PC-3 (cell line): ENCODE measurements at regions of chr1 and their contacts with region 1.

Region 1: DNA sequence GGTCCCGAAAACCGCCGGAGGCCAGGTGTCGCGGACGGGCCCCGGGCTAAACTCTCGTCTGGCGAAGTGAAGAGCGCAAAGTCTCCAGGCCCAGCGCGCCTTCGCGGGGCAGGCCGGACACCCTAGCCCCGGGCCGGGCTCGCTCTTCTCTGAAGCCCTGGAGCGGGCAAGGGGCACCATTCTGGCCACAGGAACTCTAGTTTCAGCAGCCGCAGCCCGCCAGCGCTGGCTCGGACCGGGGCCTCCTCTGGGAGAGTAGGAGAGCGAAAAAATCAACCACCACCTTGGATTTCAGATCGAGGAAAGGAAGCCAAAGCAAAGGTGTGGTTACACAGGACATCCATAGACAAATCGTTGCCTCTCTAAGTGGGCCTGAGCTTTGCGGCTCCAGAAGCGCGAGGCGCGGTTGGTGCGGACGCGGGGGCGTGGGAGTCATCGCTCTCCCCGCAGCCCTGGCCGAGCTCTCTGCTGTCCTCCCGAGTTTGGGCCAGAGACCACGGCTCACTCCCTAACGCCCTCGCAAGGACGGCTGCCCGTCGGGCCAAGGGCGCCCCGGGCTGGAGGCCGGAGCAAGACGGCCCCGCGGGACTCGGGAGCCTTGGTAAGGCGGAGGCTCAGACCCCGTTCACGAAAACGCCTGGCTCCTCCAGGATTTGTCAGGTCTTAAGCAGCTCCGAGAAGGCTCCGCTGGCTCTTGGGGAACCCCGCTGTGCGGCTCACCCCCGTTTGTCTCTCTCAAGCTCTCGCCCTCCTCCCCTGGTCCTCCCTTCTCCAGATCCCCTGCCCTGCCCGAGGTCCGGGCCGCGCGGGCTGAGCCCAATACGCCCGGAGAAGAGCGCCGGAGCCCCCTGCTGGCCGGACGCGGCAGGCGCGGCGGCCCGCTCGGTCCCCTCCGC is 132.9 kb upstream of the DPYD start:
- DNase-seq: peak; percentile 87
- ATAC-seq: peak; percentile 89
- H3K4me3 ChIP-seq: peak overlapping the region; percentile 74
- H3K27ac ChIP-seq: peak overlapping the region; percentile 50
- H3K4me1 ChIP-seq: peaks cover 40% of the 10 kb centered on the region
- H3K27me3 ChIP-seq: no peaks in the 10 kb centered on the region
- CTCF ChIP-seq: peak; percentile 89

Region 2: DNA sequence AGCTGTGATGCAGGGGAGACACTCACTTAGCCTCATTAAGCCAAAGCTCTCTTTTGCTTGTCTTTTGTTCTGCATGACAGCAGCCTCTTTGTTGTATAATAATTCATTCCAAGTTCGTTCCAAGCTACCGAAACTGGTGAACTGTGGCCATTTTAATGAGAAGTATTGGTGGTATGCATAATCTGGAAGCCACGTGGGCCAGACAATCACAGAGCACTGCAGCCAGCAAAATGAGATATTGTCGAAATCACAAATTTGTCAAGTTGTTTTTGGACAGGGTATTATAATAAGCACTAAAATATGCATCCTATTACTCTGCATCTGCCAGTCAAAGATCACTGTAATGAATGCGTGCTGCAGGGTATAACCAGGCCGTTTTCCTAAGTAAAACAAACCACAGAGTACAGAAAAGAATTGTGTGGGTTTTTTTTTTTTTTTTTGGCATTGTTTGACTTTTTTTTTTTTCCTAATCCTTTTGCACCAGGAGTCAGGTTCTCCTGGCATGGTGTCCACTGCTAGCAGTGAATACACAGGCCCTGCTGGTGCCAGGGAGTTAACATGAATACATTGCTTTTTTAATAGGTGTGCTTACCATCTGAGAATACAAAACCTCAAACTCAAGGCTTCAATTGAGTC is 908.3 kb before region 1 on chr1:
- CTCF ChIA-PET with region 1: no interaction called
- POLR2A ChIA-PET with region 1: no interaction called
- intact Hi-C with region 1: loop called (anchors 10 kb)
- DNase-seq: no peak
- ATAC-seq: peak; percentile 47
- H3K4me3 ChIP-seq: no peak overlapping the region
- H3K27ac ChIP-seq: 0 out of 2 replicates have a peak overlapping the region, but pooled peaks have one; percentile 56
- H3K4me1 ChIP-seq: peaks cover 24% of the 10 kb centered on the region
- H3K27me3 ChIP-seq: no peaks in the 10 kb centered on the region
- CTCF ChIP-seq: no peak

Region 3: GRCh38 chr1:97529600-97529999 is 524.1 kb before region 1 on chr1:
- CTCF ChIA-PET with region 1: no interaction called
- POLR2A ChIA-PET with region 1: no interaction called
- intact Hi-C with region 1: loop called (anchors 5 kb)
- DNase-seq: no peak
- ATAC-seq: no peak
- H3K4me3 ChIP-seq: no peak overlapping the region
- H3K27ac ChIP-seq: no peak overlapping the region
- H3K4me1 ChIP-seq: no peaks in the 10 kb centered on the region
- H3K27me3 ChIP-seq: no peaks in the 10 kb centered on the region
- CTCF ChIP-seq: no peak

Region 4: DNA sequence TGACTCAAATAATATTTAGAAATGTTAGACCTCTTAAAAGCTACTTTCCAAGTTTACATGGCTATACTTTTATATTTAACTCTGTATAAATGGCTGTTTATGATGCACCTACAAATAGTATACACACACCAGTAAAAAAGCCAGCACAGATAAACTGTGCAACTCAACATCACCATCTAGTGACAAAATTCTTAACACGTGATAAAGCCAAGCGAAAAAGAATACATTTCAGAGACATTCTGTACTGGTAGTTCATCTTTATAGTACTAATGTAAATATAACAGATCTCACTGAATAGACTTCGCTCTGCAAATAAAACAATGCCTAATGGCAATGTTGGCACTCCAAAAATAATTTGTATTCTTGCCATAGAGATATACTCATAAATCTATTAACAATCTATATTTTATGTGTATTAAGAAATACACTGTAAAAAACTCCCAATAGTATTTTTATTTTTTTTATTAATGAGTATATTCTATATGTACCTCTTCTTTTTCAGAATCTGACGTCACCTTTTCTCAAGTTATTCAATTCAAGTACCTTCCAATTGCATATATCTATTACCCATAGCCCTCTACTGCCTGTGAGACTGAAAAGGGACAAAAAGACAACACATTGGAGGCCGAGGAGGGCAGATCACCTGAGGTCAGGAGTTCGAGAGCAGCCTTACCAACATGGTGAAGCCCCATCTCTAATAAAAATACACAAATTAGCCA is 233.1 kb before region 1 on chr1:
- CTCF ChIA-PET with region 1: no interaction called
- POLR2A ChIA-PET with region 1: no interaction called
- intact Hi-C with region 1: loop called (anchors 2 kb)
- DNase-seq: peak; percentile 76
- ATAC-seq: peak; percentile 72
- H3K4me3 ChIP-seq: no peak overlapping the region
- H3K27ac ChIP-seq: no peak overlapping the region
- H3K4me1 ChIP-seq: no peaks in the 10 kb centered on the region
- H3K27me3 ChIP-seq: no peaks in the 10 kb centered on the region
- CTCF ChIP-seq: peak; percentile 82

Region 5: DNA sequence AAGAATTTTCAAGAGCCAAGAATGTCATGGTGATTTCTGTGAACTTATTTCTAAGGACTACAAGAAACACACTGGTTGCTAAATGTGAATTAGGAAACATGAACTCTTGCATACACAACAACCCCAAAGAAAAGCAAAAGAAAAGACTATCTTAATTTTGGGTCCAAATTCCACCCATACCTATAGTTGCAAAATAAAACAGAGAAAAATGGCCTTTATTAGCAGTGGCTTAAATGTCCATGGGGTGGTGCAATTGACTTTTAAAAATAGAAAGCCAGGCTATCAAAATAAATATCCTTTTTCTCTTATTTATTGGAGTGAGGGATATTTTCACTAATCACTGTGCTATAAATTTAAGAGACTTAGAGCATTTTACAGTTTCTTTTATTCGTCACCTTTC is 52.0 kb before region 1 on chr1:
- CTCF ChIA-PET with region 1: no interaction called
- POLR2A ChIA-PET with region 1: interaction called, 5 read pairs
- intact Hi-C with region 1: loop called (anchors 1 kb)
- DNase-seq: peak; percentile 60
- ATAC-seq: peak; percentile 26; the same call in 1 of the 2 replicates
- H3K4me3 ChIP-seq: no peak overlapping the region
- H3K27ac ChIP-seq: no peak overlapping the region
- H3K4me1 ChIP-seq: peaks cover 45% of the 10 kb centered on the region
- H3K27me3 ChIP-seq: no peaks in the 10 kb centered on the region
- CTCF ChIP-seq: peak; percentile 75

Region 6: DNA sequence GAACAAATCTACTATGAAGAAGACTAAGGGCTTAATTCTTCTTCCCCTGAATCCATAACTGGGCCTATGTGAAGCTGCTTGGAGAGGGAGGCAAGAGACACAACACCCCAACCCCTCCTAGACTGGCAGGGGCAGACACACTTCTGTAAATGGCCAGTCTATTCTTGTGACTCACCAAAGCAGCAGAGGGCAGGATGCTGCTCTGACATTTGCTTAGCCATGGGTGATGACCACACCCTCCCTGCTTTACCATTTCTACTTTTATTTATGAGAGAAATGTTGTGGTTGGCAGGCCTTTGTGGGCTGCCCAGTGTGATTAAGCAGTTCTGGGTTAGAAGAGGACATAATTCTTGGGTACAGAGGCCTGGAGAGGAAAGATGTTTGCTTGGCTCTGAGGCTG is 57.0 kb after region 1 on chr1:
- CTCF ChIA-PET with region 1: no interaction called
- POLR2A ChIA-PET with region 1: no interaction called
- intact Hi-C with region 1: loop called (anchors 5 kb)
- DNase-seq: peak; percentile 77
- ATAC-seq: peak; percentile 81
- H3K4me3 ChIP-seq: no peak overlapping the region
- H3K27ac ChIP-seq: peak overlapping the region; percentile 59
- H3K4me1 ChIP-seq: peaks cover 42% of the 10 kb centered on the region
- H3K27me3 ChIP-seq: no peaks in the 10 kb centered on the region
- CTCF ChIP-seq: no peak; the same call in 1 of the 2 replicates

Region 7: DNA sequence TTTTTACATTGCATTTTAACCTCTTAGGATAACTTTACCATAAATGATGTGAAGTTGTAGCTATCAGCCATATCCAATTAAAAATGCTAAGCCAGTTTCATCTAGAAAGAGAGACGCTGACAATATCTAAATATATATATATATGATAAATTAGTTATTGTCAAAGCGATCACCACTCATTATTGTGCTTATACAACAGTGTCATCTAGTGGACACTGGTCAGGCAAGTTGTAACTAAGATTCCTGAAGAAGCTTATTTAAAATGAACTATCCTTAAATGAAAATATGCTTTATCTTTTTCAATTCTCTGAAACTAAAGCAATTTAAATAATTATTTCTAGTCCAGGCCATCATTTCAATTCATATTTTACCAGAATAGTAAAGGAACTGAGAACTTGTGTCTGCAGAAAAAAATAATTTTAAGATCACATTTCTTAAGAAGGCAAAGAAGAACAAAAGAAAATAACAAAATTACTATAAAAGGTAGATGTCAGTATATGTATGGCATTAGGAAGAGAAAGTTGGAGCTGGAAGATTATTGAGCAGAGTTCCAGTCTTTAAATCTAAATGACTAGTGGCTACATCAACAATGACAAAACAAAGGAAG is 414.5 kb after region 1 on chr1:
- CTCF ChIA-PET with region 1: interaction called, 6 read pairs
- POLR2A ChIA-PET with region 1: no interaction called
- intact Hi-C with region 1: loop called (anchors 1 kb)
- DNase-seq: peak; percentile 89
- ATAC-seq: peak; percentile 81
- H3K4me3 ChIP-seq: no peak overlapping the region
- H3K27ac ChIP-seq: peak overlapping the region; percentile 7; the same call in 1 of the 2 replicates
- H3K4me1 ChIP-seq: peaks cover 16% of the 10 kb centered on the region
- H3K27me3 ChIP-seq: no peaks in the 10 kb centered on the region
- CTCF ChIP-seq: peak; percentile 75